ENCODE measurements at regions of chr16 and their contacts with region 1.

Region 1: GRCh38 chr16:9134739-9135138 is 43.3 kb downstream of the HAPSTR1 start:
- DNase-seq: no peak
- H3K4me3 ChIP-seq: no peak overlapping the region
- CTCF ChIP-seq: peak; percentile 74

Region 2: GRCh38 chr16:9123401-9123800 is 11.3 kb before region 1 on chr16:
- CTCF ChIA-PET with region 1: interaction called, 12 read pairs
- POLR2A ChIA-PET with region 1: no interaction called
- DNase-seq: no peak
- H3K4me3 ChIP-seq: no peak overlapping the region
- CTCF ChIP-seq: no peak

Region 3: GRCh38 chr16:9151597-9151996 is 16.9 kb after region 1 on chr16:
- CTCF ChIA-PET with region 1: interaction called, 13 read pairs
- POLR2A ChIA-PET with region 1: no interaction called
- DNase-seq: no peak
- H3K4me3 ChIP-seq: no peak overlapping the region
- CTCF ChIP-seq: no peak